Heart left ventricle (tissue), 16 donors: ENCODE measurements at regions of chr9 and their contacts with region 1.

Region 1: GRCh38 chr9:111427186-111427585 is 57.0 kb downstream of the ECPAS start:
- DNase-seq: no peak
- ATAC-seq: no peak
- H3K4me3 ChIP-seq: no peak overlapping the region
- H3K27ac ChIP-seq: no peak overlapping the region
- H3K4me1 ChIP-seq: peaks cover 0 to 7% (median 0%) of the 10 kb centered on the region in 12 donors
- H3K27me3 ChIP-seq: no peaks in the 10 kb centered on the region
- CTCF ChIP-seq: no peak
- POLR2A ChIP-seq: no peak

Region 2: GRCh38 chr9:110303133-110303532 is 1124.1 kb before region 1 on chr9:
- intact Hi-C with region 1: no loop called
- DNase-seq: no peak
- ATAC-seq: no peak
- H3K4me3 ChIP-seq: no peak overlapping the region
- H3K27ac ChIP-seq: no peak overlapping the region
- H3K4me1 ChIP-seq: no peaks in the 10 kb centered on the region
- H3K27me3 ChIP-seq: no peaks in the 10 kb centered on the region
- CTCF ChIP-seq: no peak
- POLR2A ChIP-seq: no peak

Region 3: DNA sequence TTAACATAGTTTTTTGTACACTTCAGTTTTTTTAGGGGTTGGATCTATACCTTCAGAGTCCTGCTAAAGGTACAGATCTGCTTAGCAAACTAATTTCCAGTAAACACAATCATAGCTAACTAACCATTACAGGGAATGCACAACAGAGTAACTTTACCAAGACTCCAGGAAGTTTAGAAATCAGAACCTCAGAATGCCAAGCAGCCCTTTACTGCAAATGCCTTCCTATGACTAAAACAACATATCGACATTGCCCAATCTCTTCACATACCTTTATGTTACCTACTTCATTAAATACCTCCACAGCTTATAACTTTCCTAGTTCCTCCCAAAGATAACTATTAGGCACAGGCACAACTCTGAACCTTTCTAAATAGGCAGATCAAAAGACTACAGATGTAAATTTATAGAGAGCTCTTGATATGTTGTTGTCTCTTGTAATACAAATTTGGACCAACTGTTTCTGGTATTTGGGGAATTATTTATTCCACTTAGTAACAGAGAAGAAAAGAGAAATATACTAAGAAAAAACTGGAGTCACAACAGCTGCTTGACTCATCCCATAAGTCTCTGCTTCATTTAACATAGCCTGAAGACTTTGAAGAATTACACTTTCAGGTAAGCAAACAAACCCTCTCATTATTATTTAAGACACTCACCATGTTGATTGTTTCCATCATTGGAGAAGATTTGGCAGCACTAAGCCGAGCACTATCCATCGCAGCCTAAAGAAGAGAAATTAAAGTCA is 51.2 kb before region 1 on chr9:
- intact Hi-C with region 1: loop called in 3 of 10 experiments (anchors 10 kb)
- DNase-seq: no peak
- ATAC-seq: no peak
- H3K4me3 ChIP-seq: no peak overlapping the region
- H3K27ac ChIP-seq: no peak overlapping the region
- H3K4me1 ChIP-seq: peaks cover 0 to 4% (median 0%) of the 10 kb centered on the region in 12 donors
- H3K27me3 ChIP-seq: no peaks in the 10 kb centered on the region
- CTCF ChIP-seq: no peak
- POLR2A ChIP-seq: no peak

Region 4: GRCh38 chr9:111386386-111386785 is 40.8 kb before region 1 on chr9:
- intact Hi-C with region 1: no loop called
- DNase-seq: no peak
- ATAC-seq: no peak
- H3K4me3 ChIP-seq: no peak overlapping the region
- H3K27ac ChIP-seq: no peak overlapping the region
- H3K4me1 ChIP-seq: no peaks in the 10 kb centered on the region
- H3K27me3 ChIP-seq: no peaks in the 10 kb centered on the region
- CTCF ChIP-seq: no peak
- POLR2A ChIP-seq: no peak